Sigmoid colon (tissue), 7 donors: ENCODE measurements at regions of chr3 and their contacts with region 1.

Region 1: GRCh38 chr3:148943506-148944205 is 47.7 kb upstream of the GYG1 start:
- DNase-seq: no peak
- H3K4me3 ChIP-seq: no peak overlapping the region
- H3K27ac ChIP-seq: no peak overlapping the region
- H3K4me1 ChIP-seq: peaks cover 0 to 26% (median 11%) of the 10 kb centered on the region in 4 donors
- H3K27me3 ChIP-seq: no peaks in the 10 kb centered on the region
- CTCF ChIP-seq: peak in 3 of 4 experiments; percentile 60 to 66 (median 65)
- EP300 ChIP-seq: no peak
- POLR2A ChIP-seq: no peak

Region 2: DNA sequence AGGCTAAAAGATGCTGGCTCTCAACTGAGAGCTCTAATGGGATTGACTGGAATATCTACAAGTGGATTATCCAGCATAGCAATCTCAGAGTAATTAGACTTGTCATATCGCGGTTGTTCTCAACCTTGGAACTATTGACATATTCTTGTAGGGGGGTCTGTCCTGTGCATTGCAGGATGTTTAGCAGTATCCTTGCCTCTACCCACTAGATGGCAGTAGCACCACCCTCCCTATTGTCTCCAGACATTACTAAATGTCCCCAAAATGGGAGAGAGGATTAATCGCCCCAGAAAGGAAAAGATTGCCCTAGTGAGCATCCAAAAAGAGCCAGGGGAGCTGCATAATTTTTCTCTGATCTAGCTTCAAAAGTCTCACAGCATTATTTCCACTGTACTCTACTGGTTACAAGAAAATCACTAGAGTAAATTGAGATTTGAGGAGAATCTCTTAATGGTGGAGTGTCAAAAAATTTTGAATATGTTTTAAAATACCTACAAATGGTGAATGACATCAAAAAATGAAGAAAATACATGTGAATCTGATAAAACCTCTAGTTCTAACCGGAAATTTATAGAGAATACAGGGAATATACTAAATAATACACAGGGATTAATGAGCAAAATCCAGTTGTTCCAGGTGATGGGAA is 634.1 kb before region 1 on chr3:
- intact Hi-C with region 1: loop called (anchors 5 kb)
- DNase-seq: no peak
- H3K4me3 ChIP-seq: no peak overlapping the region
- H3K27ac ChIP-seq: no peak overlapping the region
- H3K4me1 ChIP-seq: no peaks in the 10 kb centered on the region
- H3K27me3 ChIP-seq: no peaks in the 10 kb centered on the region
- CTCF ChIP-seq: peak in 2 of 4 experiments; percentile 5 to 58
- EP300 ChIP-seq: no peak
- POLR2A ChIP-seq: no peak

Region 3: GRCh38 chr3:148379763-148380382 is 563.8 kb before region 1 on chr3:
- intact Hi-C with region 1: loop called (anchors 5 kb)
- DNase-seq: no peak
- H3K4me3 ChIP-seq: no peak overlapping the region
- H3K27ac ChIP-seq: no peak overlapping the region
- H3K4me1 ChIP-seq: no peaks in the 10 kb centered on the region
- H3K27me3 ChIP-seq: no peaks in the 10 kb centered on the region
- CTCF ChIP-seq: peak; percentile 25 to 59 (median 54)
- EP300 ChIP-seq: no peak
- POLR2A ChIP-seq: no peak

Region 4: DNA sequence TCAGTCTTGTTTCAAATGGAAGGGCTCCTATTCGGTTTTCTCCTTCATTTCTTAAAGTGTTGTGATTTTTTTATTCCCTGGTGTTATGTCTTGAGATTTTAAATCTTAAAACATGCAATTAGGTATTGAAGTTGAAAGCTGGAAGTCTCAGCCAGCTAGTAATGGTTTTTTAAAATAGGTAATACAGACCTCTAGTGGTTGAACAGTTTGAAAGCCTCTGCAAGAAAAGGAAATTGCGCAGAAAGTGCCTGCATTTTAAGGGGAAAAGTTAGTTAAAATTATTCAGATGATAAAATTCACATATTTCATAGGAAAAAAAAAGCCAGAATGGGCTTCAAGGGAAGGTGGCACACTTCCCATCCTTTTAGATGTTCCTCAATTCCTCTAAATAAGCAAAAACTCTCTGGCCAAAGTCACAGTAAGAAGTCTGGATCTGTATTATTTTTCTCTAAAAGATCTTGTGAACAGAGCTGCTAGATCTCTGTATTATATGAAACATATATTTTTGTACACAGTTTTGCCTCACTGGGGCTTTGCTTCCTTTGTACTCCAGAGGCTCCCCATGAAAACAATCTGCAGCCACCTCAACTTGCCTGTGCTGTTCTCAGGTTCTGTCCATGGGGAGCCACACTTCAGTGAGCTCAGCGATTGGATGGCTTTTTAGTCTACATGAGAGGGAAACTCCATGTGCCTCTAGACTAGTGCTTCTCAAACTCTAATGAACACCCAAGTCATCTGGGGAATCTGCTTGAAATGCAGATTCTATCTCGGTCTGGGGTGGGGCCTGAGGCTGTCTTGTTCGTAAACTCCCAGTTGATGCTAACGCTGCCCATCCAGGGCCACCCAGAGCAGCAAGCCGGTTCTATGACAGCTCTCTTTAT is 224.4 kb before region 1 on chr3:
- intact Hi-C with region 1: loop called (anchors 5 kb)
- DNase-seq: no peak
- H3K4me3 ChIP-seq: no peak overlapping the region
- H3K27ac ChIP-seq: peak overlapping the region in 2 of 4 donors; percentile 45 to 47
- H3K4me1 ChIP-seq: peaks cover 0 to 76% (median 38%) of the 10 kb centered on the region in 4 donors
- H3K27me3 ChIP-seq: no peaks in the 10 kb centered on the region
- CTCF ChIP-seq: peak in 2 of 4 experiments; percentile 25 to 52
- EP300 ChIP-seq: no peak
- POLR2A ChIP-seq: no peak

Region 5: GRCh38 chr3:148861277-148861869 is 82.3 kb before region 1 on chr3:
- intact Hi-C with region 1: loop called (anchors 2 kb)
- DNase-seq: no peak
- H3K4me3 ChIP-seq: no peak overlapping the region
- H3K27ac ChIP-seq: no peak overlapping the region
- H3K4me1 ChIP-seq: no peaks in the 10 kb centered on the region
- H3K27me3 ChIP-seq: no peaks in the 10 kb centered on the region
- CTCF ChIP-seq: peak; percentile 28 to 79 (median 58)
- EP300 ChIP-seq: no peak
- POLR2A ChIP-seq: no peak